ENCODE measurements at regions of chr1 and their contacts with region 1.

Region 1: GRCh38 chr1:22131875-22132486 is 10.9 kb downstream of the WNT4 start:
- DNase-seq: peak; percentile 62
- H3K4me3 Mint-ChIP-seq: no peak overlapping the region
- H3K27ac Mint-ChIP-seq: no peak overlapping the region
- H3K4me1 Mint-ChIP-seq: no peaks in the 10 kb centered on the region
- H3K27me3 Mint-ChIP-seq: no peaks in the 10 kb centered on the region

Region 2: GRCh38 chr1:21882669-21883415 is 249.1 kb before region 1 on chr1:
- CTCF ChIA-PET with region 1: no interaction called
- POLR2A ChIA-PET with region 1: no interaction called
- DNase-seq: no peak
- H3K4me3 Mint-ChIP-seq: no peak overlapping the region
- H3K27ac Mint-ChIP-seq: no peak overlapping the region
- H3K4me1 Mint-ChIP-seq: no peaks in the 10 kb centered on the region
- H3K27me3 Mint-ChIP-seq: no peaks in the 10 kb centered on the region

Region 3: GRCh38 chr1:22105611-22106207 is 26.3 kb before region 1 on chr1:
- CTCF ChIA-PET with region 1: interaction called, 11 read pairs
- POLR2A ChIA-PET with region 1: no interaction called
- DNase-seq: no peak
- H3K4me3 Mint-ChIP-seq: no peak overlapping the region
- H3K27ac Mint-ChIP-seq: peak overlapping the region; percentile 85
- H3K4me1 Mint-ChIP-seq: peaks cover 56% of the 10 kb centered on the region
- H3K27me3 Mint-ChIP-seq: no peaks in the 10 kb centered on the region

Region 4: DNA sequence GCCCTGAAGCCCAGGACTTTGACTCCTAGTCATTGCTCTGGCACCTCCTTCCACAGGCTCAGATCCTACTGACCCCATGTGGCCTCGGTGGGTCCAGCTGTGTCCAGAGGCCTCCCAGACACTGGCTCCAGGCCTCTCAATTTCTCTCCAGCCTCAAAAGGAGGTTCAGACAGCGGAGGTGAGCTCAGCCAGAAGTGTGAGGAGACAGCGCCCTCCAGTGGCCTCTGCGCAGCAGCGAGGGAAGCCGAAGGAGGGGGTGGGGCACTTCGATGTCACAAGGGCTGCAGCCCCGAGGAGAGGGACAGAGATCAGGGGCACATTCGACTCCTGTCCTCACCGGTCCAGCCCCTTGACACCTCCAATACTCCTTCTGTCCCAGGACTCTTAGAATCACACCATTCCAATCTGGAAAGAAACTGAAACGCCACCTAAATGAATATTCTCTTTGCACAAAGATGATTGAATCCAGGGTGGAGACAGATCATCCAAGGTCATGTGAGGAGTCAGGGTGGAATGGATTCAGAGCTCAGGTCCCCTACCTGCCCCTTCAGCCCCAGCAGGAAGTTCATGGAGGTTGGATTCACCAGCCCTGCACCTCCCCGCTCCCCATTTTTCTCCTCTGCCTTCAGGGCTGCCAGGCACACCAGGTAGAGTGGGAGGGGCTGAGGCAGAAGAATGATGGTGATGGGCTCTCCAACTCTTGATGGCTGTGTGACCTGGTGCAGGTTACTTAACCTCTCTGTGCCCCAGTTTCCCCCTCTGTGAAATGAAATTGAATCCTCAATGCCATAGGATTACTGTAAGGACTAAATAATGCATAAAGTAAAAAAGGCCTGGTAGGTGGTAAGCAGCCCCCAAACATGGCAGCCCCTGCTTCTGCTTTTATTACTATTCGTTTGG is 284.8 kb after region 1 on chr1:
- CTCF ChIA-PET with region 1: interaction called, 14 read pairs
- POLR2A ChIA-PET with region 1: interaction called, 3 read pairs
- DNase-seq: peak; percentile 76
- H3K4me3 Mint-ChIP-seq: no peak overlapping the region
- H3K27ac Mint-ChIP-seq: no peak overlapping the region
- H3K4me1 Mint-ChIP-seq: no peaks in the 10 kb centered on the region
- H3K27me3 Mint-ChIP-seq: peaks cover 29% of the 10 kb centered on the region

Region 5: DNA sequence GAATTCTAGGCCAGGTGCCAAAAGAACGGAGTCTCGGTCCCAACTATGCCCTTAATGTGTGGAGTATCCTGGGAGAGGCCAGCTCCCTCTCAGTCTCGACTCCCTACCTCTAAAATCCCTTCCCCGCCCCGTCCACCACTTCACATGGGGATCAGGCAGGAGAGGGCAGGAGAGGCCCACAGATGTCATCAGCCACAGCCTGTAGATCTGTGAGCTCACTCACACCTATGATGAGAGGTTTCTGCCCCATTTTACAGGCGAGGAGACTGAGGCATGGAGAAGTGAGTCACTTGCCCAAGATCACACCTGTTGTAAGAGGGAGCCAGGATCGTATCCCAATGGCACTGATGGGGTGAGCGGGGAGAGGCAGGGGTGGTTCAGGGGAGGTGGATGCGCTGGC is 410.9 kb after region 1 on chr1:
- CTCF ChIA-PET with region 1: no interaction called
- POLR2A ChIA-PET with region 1: no interaction called
- DNase-seq: no peak
- H3K4me3 Mint-ChIP-seq: no peak overlapping the region
- H3K27ac Mint-ChIP-seq: no peak overlapping the region
- H3K4me1 Mint-ChIP-seq: peaks cover 6% of the 10 kb centered on the region
- H3K27me3 Mint-ChIP-seq: peaks cover 17% of the 10 kb centered on the region

Measured in activated CD4-positive, alpha-beta memory T cell treated with anti-CD3 and anti-CD28 coated beads, Interleukin-2, amount 10 ng/mL, durations not matched to agents 7 days and 5 days (primary cell).